Heart left ventricle (tissue), 16 donors: ENCODE measurements at regions of chr5 and their contacts with region 1.

Region 1: DNA sequence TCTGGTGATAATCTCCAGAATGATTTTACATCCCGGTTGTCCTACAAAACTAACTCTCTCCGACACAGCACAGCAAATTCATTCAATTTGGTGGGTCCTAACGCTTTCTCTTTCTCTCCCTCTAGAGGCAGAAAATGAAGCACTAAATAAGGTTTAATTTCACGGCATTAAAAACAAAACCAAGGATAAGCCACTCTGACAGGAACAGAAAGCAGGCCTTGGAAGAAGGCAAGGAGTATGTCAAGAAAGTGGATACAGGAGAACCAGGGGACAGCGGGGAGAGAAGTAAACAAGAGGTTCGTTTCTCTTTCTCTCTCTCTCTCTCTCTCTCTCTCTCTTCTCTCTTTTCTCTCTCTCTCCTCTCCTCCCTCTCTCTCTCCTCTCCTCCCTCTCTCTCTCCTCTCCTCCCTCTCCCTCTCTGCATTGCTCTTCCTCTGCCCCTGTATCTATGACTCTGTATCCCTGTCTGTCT is 49.8 kb downstream of the EBF1 start:
- DNase-seq: no peak
- ATAC-seq: peak; percentile 43 to 70 (median 63)
- H3K4me3 ChIP-seq: peak overlapping the region in 7 of 12 donors; percentile 1 to 55 (median 44)
- H3K27ac ChIP-seq: peak overlapping the region; percentile 73 to 88 (median 84)
- H3K4me1 ChIP-seq: peaks cover 0 to 79% (median 45%) of the 10 kb centered on the region in 12 donors
- H3K27me3 ChIP-seq: peaks cover 0 to 13% (median 0%) of the 10 kb centered on the region in 9 donors
- CTCF ChIP-seq: peak; percentile 24 to 66 (median 44)
- POLR2A ChIP-seq: peak in 1 of 2 donors; percentile 24

Region 2: GRCh38 chr5:158875272-158875679 is 174.6 kb before region 1 on chr5:
- intact Hi-C with region 1: loop called in 1 of 10 experiments (anchors 5 kb)
- DNase-seq: no peak
- ATAC-seq: peak in 2 of 4 donors; percentile 62 to 67
- H3K4me3 ChIP-seq: peak overlapping the region in 10 of 12 donors; percentile 10 to 42 (median 22)
- H3K27ac ChIP-seq: peak overlapping the region in 11 of 12 donors; percentile 33 to 78 (median 69)
- H3K4me1 ChIP-seq: peaks cover 0 to 65% (median 29%) of the 10 kb centered on the region in 12 donors
- H3K27me3 ChIP-seq: no peaks in the 10 kb centered on the region
- CTCF ChIP-seq: no peak
- POLR2A ChIP-seq: no peak

Region 3: DNA sequence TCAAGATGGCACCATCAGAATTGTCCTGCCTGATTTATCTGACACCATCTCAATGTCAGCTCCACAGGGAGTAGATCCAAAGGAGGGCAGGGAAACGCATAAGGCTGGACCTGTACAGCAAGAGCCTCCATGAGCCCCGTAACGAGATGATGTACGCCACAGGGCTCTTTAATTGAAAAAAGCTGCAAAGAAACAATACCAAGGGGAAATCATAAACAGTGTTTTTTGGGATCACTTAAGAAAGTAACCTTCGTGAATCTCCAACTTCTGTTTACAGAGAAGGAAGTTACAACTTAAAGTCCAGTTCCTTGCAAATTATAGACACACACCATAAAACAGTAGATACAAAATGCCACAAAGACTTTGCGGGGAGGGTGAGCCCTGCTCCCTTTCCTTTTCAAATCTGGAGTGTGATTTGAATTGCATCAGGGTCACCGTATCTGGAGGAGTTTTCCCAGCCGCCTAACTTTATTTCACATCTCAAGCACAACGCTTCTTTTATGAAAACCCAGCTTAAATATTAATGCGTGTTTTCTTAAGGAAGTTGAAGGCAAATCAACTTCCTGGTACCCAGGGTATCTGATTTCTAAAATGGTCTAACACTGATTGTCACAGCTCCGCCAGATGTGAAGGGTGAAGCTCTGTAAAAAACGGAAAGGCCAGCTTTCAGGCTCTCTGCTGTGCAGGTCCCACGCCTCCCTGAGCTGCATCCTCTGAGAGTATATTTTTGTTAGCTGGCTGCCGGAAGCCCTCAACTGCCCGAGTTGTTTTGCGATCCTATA is 39.0 kb before region 1 on chr5:
- intact Hi-C with region 1: loop called in 2 of 10 experiments (anchors 5 kb)
- DNase-seq: peak in 3 of 5 donors; percentile 49 to 57 (median 54)
- ATAC-seq: peak; percentile 76 to 81 (median 79)
- H3K4me3 ChIP-seq: peak overlapping the region in 10 of 12 donors; percentile 3 to 43 (median 34)
- H3K27ac ChIP-seq: peak overlapping the region; percentile 19 to 85 (median 76)
- H3K4me1 ChIP-seq: peaks cover 0 to 54% (median 28%) of the 10 kb centered on the region in 12 donors
- H3K27me3 ChIP-seq: no peaks in the 10 kb centered on the region
- CTCF ChIP-seq: no peak
- POLR2A ChIP-seq: no peak

Region 4: DNA sequence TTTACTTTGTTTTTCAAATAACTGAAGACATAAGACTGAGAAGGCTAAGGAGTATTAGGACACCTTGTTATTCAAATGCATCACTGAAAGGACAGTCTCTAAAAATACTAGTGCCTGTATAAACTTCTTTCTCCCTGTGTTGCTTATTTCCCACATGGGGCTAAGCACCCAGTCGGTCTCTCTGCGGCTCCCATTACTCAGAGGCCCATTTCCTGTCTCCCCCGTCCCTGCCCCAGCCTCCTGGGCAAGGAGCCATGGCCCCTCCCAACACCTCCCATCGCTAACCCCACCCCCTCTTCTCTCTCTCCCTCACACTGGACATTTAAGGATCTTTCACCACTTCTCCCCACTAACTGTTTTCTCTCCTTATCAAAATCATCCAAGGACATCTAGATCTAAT is 32.1 kb before region 1 on chr5:
- intact Hi-C with region 1: loop called in 2 of 10 experiments (anchors 5 kb)
- DNase-seq: peak; percentile 77 to 87 (median 83)
- ATAC-seq: peak; percentile 73 to 91 (median 86)
- H3K4me3 ChIP-seq: peak overlapping the region in 1 of 12 donors; percentile 13
- H3K27ac ChIP-seq: peak overlapping the region in 11 of 12 donors; percentile 12 to 75 (median 52)
- H3K4me1 ChIP-seq: peaks cover 3 to 62% (median 41%) of the 10 kb centered on the region in 12 donors
- H3K27me3 ChIP-seq: no peaks in the 10 kb centered on the region
- CTCF ChIP-seq: no peak
- POLR2A ChIP-seq: no peak